ENCODE measurements at regions of chr7 and their contacts with region 1.

Region 1: GRCh38 chr7:55964261-55965099 is at the start of gene NIPSNAP2:
- DNase-seq: no peak
- H3K4me3 ChIP-seq: peak within 1 kb of the TSS; percentile 50 to 91 (median 81)
- H3K27ac ChIP-seq: peak within 1 kb of the TSS; percentile 92 to 99 (median 98)
- H3K4me1 ChIP-seq: peaks cover 11 to 38% (median 19%) of the 10 kb centered on the region in 3 donors
- H3K27me3 ChIP-seq: no peaks in the 10 kb centered on the region
- CTCF ChIP-seq: peak in 5 of 6 experiments; percentile 12 to 82 (median 72)
- POLR2A ChIP-seq: peak in 2 of 4 donors; percentile 31 to 46
- total RNA-seq, gene NIPSNAP2: 11.0 to 55.5 (median 34.6) TPM

Region 2: DNA sequence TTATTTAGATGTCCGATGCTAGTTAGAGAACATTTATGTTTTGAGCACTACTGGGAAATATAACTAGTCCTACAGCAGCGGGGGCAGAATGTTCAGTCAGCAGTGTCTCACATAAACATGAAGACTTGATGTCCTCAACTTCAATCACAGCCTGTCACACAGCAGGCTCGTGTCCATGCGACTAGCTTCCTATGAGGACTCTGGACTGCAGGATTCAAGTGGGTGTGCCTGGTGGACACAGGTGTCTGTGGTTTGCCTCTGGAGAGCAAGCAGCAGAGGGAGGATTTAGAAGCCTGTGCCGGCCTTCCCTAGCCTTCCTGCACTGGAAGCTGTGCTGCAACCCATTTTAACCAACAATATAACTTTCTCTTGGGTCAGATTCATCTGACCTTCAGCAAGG is 629.3 kb before region 1 on chr7:
- intact Hi-C with region 1: no loop called
- DNase-seq: no peak
- H3K4me3 ChIP-seq: no peak overlapping the region
- H3K27ac ChIP-seq: no peak overlapping the region
- H3K4me1 ChIP-seq: no peaks in the 10 kb centered on the region
- H3K27me3 ChIP-seq: no peaks in the 10 kb centered on the region
- CTCF ChIP-seq: no peak
- POLR2A ChIP-seq: no peak

Region 3: GRCh38 chr7:55641273-55641691 is 323.2 kb before region 1 on chr7:
- intact Hi-C with region 1: loop called (anchors 5 kb)
- DNase-seq: no peak
- H3K4me3 ChIP-seq: no peak overlapping the region
- H3K27ac ChIP-seq: no peak overlapping the region
- H3K4me1 ChIP-seq: peaks cover 0 to 6% (median 0%) of the 10 kb centered on the region in 3 donors
- H3K27me3 ChIP-seq: no peaks in the 10 kb centered on the region
- CTCF ChIP-seq: peak; percentile 63 to 86 (median 76)
- POLR2A ChIP-seq: no peak

Region 4: DNA sequence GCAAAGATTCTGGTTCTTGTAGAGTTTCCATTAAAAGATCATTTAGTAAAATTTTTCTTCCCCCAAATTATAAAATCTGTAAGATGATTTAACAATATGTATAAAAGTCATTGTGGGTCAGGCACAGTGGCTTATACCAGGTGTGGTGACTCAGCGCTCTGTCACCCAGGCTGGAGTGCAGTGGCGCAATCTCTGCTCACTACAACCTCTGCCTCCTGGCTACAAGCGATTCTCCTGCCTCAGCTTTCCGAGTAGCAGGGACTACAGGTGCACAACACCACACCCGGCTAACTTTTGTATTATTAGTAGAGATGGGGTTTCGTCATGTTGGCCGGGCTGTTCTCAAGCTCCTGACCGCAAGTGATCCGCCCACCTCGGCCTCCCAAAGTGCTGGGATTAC is 170.0 kb before region 1 on chr7:
- intact Hi-C with region 1: no loop called
- DNase-seq: no peak
- H3K4me3 ChIP-seq: no peak overlapping the region
- H3K27ac ChIP-seq: no peak overlapping the region
- H3K4me1 ChIP-seq: no peaks in the 10 kb centered on the region
- H3K27me3 ChIP-seq: no peaks in the 10 kb centered on the region
- CTCF ChIP-seq: no peak
- POLR2A ChIP-seq: no peak

Region 5: GRCh38 chr7:55887821-55888247 is 76.6 kb before region 1 on chr7:
- intact Hi-C with region 1: loop called (anchors 10 kb)
- DNase-seq: no peak
- H3K4me3 ChIP-seq: peak overlapping the region; percentile 35 to 92 (median 68)
- H3K27ac ChIP-seq: peak overlapping the region; percentile 46 to 75 (median 68)
- H3K4me1 ChIP-seq: peaks cover 0 to 11% (median 0%) of the 10 kb centered on the region in 3 donors
- H3K27me3 ChIP-seq: no peaks in the 10 kb centered on the region
- CTCF ChIP-seq: no peak
- POLR2A ChIP-seq: no peak